ENCODE measurements at regions of chr14 and their contacts with region 1.

Region 1: DNA sequence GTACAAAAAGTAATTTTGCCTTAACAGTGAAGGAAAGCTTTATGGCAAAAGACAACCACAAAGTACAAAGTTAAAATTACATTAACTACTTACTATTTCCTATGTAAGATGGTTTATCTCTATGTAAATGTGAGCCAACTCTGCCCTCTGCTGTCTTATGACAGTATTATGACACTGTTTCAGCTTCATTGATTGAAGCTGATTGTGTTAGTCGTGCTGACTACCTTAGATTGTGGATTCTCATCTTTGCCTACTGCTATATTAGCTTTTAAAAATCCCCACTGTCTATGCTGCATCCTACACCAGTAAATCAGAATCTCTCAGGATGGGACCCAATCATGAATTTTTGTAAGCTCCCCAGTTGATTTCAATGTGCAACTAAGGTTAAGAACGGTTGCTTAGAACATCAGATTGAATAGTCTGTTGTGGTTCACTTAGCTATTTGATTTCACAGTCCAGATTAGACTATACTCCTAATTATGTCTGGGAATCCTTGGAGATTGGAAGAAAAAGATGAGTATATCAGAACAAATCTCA is 12.2 kb upstream of the SPTB start:
- DNase-seq: peak in 1 of 10 donors; percentile 15

Region 2: GRCh38 chr14:64800000-64800399 is 91.9 kb before region 1 on chr14:
- intact Hi-C with region 1: loop called (anchors 5 kb)
- DNase-seq: no peak

Region 3: DNA sequence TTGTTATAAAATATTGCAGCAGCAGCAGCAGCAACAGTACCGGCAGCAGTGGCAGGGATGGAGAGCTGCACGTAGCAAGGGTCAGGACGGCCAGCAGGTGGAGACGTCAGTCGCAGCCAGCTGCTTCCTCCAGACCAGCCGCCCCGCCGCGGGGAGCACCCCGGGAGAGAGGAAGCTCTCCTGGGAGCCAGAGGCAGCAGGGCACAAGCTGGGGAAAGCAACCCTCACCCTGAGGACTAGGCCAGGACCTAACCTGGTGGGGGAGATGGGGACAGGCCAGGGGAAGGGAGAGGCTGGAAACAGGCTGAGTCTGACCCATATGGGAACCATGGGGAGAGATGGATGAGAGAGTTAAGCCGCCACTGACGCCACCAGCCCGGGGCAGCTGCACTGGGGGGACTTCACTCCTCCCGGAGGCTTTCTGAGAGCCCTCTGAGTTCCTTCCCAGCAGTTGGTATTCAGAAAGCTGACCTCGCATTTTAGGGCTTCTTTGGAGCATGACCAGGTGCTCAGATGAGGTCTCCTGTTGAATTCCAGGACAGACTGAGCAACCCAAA is 68.5 kb before region 1 on chr14:
- intact Hi-C with region 1: loop called (anchors 2 kb)
- DNase-seq: peak; percentile 52 to 96 (median 78)

Region 4: GRCh38 chr14:65019944-65020566 is 128.1 kb after region 1 on chr14:
- intact Hi-C with region 1: no loop called
- DNase-seq: peak in 4 of 10 donors; percentile 26 to 87 (median 41)

Region 5: GRCh38 chr14:65054471-65055085 is 162.7 kb after region 1 on chr14:
- intact Hi-C with region 1: no loop called
- DNase-seq: peak in 2 of 10 donors; percentile 66 to 84

Measured in posterior cingulate gyrus (tissue), 11 donors.